CD14-positive monocyte (primary cell): ENCODE measurements at regions of chr5 and their contacts with region 1.

Region 1: DNA sequence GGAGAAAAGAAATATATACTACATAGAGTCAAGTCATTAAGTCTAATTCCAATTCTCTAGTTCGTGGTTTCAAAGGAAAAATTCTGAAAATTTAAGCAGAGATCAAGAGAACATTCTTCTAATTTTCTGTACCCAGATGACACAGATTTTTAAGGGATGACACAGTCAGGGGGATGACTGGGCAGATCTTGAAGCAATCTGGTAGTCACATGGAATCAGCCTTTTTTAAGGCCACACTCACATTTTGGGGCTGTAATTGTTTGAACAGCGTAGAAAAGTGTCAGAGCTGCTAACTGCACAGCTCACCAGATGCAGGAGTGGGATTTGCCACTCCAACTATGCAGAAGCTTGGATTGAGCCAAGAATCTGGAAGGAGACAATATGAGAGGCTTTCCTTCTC is 20.4 kb downstream of the PDE4D start:
- DNase-seq: no peak
- H3K4me3 ChIP-seq: no peak overlapping the region
- H3K4me3 Mint-ChIP-seq: no peak overlapping the region
- H3K27ac ChIP-seq: no peak overlapping the region
- H3K27ac Mint-ChIP-seq: no peak overlapping the region
- H3K4me1 ChIP-seq: no peaks in the 10 kb centered on the region
- H3K4me1 Mint-ChIP-seq: peaks cover 4% of the 10 kb centered on the region
- H3K27me3 ChIP-seq: no peaks in the 10 kb centered on the region
- H3K27me3 Mint-ChIP-seq: peaks cover 0 to 2% (median 0%) of the 10 kb centered on the region in 3 donors
- CTCF ChIP-seq: no peak

Region 2: DNA sequence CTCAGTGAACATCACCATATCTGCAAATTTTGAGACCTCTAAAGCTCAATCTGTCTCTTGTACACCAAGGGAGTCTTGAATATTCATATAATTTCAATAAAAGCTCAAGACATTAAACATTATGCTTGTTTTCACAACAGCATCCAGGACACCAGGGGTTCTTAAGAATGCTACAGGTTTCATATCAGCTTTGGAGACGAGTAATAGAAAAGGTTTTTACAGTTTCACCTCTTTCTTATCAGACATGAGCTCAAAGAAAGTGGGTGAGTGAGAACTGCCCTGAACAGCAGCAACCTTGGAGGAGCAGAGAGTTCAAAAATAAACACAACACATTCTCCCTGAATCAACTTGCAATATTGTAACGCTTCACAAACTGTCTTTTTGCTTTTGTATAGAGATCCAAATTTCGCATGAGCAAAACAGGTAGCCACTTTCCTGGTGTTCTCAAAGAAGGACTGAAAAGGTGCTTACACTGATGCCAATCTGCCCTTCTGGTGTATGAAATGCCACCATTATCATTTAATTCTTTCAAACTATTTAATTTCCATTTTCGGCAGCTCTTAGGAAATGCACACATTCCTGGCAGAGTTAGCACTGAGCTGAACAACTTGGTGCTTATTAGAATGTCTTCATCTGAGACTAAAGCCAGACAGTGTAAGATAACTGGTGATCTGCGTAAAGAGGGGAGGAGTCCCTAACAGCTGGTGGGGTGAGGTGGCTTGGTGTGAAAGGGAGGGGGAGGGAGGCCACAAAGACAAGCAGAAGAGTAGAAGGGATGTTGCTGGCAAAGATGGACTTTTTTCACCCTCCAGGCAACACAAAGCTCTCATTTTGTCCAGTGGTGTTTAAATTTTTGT is 514.9 kb before region 1 on chr5:
- intact Hi-C with region 1: no loop called
- DNase-seq: no peak
- H3K4me3 ChIP-seq: no peak overlapping the region
- H3K4me3 Mint-ChIP-seq: no peak overlapping the region
- H3K27ac ChIP-seq: no peak overlapping the region
- H3K27ac Mint-ChIP-seq: no peak overlapping the region
- H3K4me1 ChIP-seq: peaks cover 0 to 5% of the 10 kb centered on the region in 2 donors
- H3K4me1 Mint-ChIP-seq: peaks cover 22% of the 10 kb centered on the region
- H3K27me3 ChIP-seq: no peaks in the 10 kb centered on the region
- H3K27me3 Mint-ChIP-seq: no peaks in the 10 kb centered on the region
- CTCF ChIP-seq: no peak

Region 3: GRCh38 chr5:59473611-59474010 is 399.5 kb before region 1 on chr5:
- intact Hi-C with region 1: no loop called
- DNase-seq: no peak
- H3K4me3 ChIP-seq: no peak overlapping the region
- H3K4me3 Mint-ChIP-seq: no peak overlapping the region
- H3K27ac ChIP-seq: no peak overlapping the region
- H3K27ac Mint-ChIP-seq: no peak overlapping the region
- H3K4me1 ChIP-seq: no peaks in the 10 kb centered on the region
- H3K4me1 Mint-ChIP-seq: no peaks in the 10 kb centered on the region
- H3K27me3 ChIP-seq: no peaks in the 10 kb centered on the region
- H3K27me3 Mint-ChIP-seq: no peaks in the 10 kb centered on the region
- CTCF ChIP-seq: no peak

Region 4: DNA sequence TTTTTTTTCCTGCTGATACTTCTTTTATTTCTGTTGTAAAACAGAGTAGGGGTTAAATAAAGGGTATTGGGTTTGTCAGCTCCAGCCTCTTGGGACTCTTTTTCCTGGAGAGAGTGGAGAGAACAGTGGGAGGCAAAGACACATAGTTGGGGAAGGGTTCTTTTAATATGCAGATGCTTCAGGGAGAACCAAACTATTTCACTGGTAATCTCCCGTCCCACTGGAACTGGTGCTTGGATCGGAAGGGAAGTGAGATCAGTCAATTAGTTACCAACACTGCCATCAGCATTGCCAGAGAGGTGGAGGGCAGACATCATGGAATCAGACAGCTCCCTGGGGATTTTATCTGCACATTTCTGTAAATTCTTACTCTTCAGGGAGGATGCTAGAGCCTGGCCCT is 1018.6 kb after region 1 on chr5:
- intact Hi-C with region 1: loop called in 1 of 2 experiments (anchors 10 kb)
- DNase-seq: no peak
- H3K4me3 ChIP-seq: no peak overlapping the region
- H3K4me3 Mint-ChIP-seq: no peak overlapping the region
- H3K27ac ChIP-seq: no peak overlapping the region
- H3K27ac Mint-ChIP-seq: peak overlapping the region in 1 of 7 donors; percentile 59
- H3K4me1 ChIP-seq: no peaks in the 10 kb centered on the region
- H3K4me1 Mint-ChIP-seq: no peaks in the 10 kb centered on the region
- H3K27me3 ChIP-seq: no peaks in the 10 kb centered on the region
- H3K27me3 Mint-ChIP-seq: no peaks in the 10 kb centered on the region
- CTCF ChIP-seq: no peak